ENCODE measurements at regions of chr22 and their contacts with region 1.

Region 1: DNA sequence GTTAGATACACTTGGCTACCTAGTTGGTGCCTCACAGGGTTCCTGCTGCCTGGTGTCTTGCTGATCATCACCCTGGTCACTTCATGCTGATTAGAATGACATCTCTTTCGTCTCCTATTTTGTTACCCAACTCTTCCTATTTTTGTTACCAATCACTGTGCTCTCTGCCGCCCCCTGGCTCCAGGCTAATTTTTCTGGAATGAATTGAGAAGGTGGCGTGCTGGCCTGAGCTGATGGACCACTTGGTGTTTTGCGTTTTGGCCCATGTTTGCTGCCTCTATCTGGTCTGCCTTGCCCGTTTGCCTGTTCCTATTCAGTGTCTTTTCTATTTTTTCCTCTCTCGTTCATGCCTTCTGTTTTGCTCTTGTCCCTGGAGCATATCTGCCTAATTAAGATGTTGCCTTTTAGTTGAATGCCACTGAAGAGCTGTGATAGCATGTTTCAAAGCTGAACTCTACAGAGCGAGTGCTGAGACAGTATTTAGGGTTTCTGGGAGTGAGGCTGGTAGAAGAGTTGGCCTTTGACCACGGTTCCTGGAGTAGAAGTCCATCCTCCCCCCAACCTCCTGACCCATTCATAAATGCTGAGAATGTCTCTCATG is 5.9 kb upstream of the ATF4 start:
- DNase-seq: peak; percentile 63
- H3K4me3 Mint-ChIP-seq: no peak overlapping the region
- H3K27ac Mint-ChIP-seq: peak overlapping the region; percentile 11
- H3K4me1 Mint-ChIP-seq: peaks cover 36% of the 10 kb centered on the region
- H3K27me3 Mint-ChIP-seq: no peaks in the 10 kb centered on the region

Region 2: DNA sequence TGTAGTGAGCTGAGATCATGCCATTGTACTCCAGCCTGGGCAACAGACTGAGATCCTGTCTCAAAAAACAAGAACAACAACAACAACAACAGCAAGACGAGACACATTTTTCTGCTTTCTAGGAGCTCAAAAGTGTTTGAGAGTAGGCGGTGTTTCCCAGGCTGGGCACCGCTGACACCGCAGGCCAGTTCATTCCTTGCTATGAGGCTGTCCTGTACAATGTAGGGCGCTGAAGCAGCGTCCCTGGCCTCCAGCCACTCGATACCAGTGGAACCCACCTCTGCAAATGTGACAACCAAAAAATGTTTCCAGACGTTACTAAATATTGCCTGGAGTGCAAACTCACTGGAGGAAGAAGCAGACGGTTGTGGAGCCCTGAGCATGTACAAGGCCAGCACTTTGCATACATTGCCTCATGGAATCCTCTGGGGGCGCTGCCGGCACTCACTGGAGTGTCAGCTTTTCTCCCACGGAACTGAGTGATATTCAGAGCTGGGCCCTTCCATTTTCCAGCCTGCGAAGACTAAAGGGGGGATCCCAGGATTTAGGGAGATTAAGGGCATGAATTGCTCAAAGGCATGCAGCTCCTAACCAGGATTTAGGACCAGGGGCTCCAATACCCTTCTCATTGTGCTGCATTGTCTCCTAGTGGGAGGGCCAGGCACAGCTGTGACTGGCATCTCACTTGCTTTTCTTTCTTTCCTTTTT is 18.2 kb before region 1 on chr22:
- CTCF ChIA-PET with region 1: interaction called, 27 read pairs
- POLR2A ChIA-PET with region 1: interaction called, 124 read pairs
- DNase-seq: peak; percentile 63
- H3K4me3 Mint-ChIP-seq: no peak overlapping the region
- H3K27ac Mint-ChIP-seq: no peak overlapping the region
- H3K4me1 Mint-ChIP-seq: peaks cover 8% of the 10 kb centered on the region
- H3K27me3 Mint-ChIP-seq: peaks cover 12% of the 10 kb centered on the region

Region 3: DNA sequence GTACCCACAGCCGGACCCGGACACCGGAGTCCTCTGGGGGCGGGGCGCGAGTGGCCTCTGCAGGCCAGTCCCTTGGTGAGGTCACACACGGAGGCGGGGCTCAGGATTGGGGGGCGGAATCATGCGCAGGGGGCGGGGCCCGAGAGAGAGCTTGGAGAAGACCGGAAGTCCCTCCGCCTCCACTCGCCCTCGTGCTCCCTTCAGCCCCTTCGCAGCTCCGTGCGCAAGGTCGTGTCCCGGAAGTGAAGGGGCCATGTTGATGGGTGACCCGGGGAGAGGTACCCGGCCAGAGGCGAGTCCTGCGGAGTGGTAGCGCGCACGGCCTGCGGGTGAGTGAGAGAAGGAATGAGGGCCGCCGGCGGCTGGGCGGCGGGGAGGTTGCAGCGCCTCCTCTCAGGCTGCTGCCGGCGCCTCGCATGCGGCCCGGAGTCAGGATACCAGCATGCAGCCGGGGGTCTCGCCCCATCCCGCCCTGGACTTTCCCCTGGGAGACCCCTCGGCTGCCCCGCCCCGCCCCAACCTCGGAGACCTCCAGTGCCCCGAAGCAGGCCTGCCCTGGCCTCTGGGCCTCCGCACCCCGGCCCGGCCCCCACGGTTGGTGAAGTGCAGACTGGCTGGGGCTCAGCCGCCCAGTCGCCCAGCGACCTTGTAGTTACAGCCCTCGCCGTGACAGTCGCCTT is 12.2 kb before region 1 on chr22 and contains the start of gene MIEF1:
- CTCF ChIA-PET with region 1: interaction called, 27 read pairs
- POLR2A ChIA-PET with region 1: interaction called, 124 read pairs
- DNase-seq: peak; percentile 94
- H3K4me3 Mint-ChIP-seq: peak within 1 kb of the TSS; percentile 91
- H3K27ac Mint-ChIP-seq: peak within 1 kb of the TSS; percentile 92
- H3K4me1 Mint-ChIP-seq: peaks cover 41% of the 10 kb centered on the region
- H3K27me3 Mint-ChIP-seq: peaks cover 10% of the 10 kb centered on the region
- total RNA-seq, gene MIEF1: 32.4 to 32.6 TPM

Measured in activated CD4-positive, alpha-beta memory T cell treated with anti-CD3 and anti-CD28 coated beads, Interleukin-2, amount 10 ng/mL, durations not matched to agents 7 days and 5 days (primary cell).